ENCODE measurements at regions of chr9 and their contacts with region 1.

Region 1: GRCh38 chr9:114906908-114907571 is 23.4 kb downstream of the TNFSF8 start:
- DNase-seq: no peak
- H3K4me3 ChIP-seq: no peak overlapping the region
- H3K4me3 Mint-ChIP-seq: peak overlapping the region in 7 of 8 donors; percentile 26 to 85 (median 75)
- H3K27ac ChIP-seq: peak overlapping the region; percentile 44
- H3K27ac Mint-ChIP-seq: peak overlapping the region in 6 of 7 donors; percentile 88 to 96 (median 90)
- H3K4me1 ChIP-seq: peaks cover 100% of the 10 kb centered on the region
- H3K4me1 Mint-ChIP-seq: peaks cover 59 to 83% (median 69%) of the 10 kb centered on the region in 4 donors
- H3K27me3 ChIP-seq: no peaks in the 10 kb centered on the region
- H3K27me3 Mint-ChIP-seq: no peaks in the 10 kb centered on the region

Region 2: GRCh38 chr9:114681594-114682332 is 225.3 kb before region 1 on chr9 and contains the start of gene TEX48:
- CTCF ChIA-PET with region 1: interaction called, 111 read pairs
- POLR2A ChIA-PET with region 1: interaction called, 5 read pairs
- intact Hi-C with region 1: loop called (anchors 1 kb)
- DNase-seq: peak; percentile 79 to 84 (median 81)
- H3K4me3 ChIP-seq: peak within 1 kb of the TSS in 1 of 2 donors; percentile 11
- H3K4me3 Mint-ChIP-seq: peak within 1 kb of the TSS; percentile 1 to 80 (median 62)
- H3K27ac ChIP-seq: peak within 1 kb of the TSS; percentile 23
- H3K27ac Mint-ChIP-seq: peak within 1 kb of the TSS; percentile 75 to 96 (median 92)
- H3K4me1 ChIP-seq: peaks cover 22% of the 10 kb centered on the region
- H3K4me1 Mint-ChIP-seq: peaks cover 15 to 18% (median 17%) of the 10 kb centered on the region in 4 donors
- H3K27me3 ChIP-seq: no peaks in the 10 kb centered on the region
- H3K27me3 Mint-ChIP-seq: peaks cover 2 to 3% of the 10 kb centered on the region in 2 donors
- total RNA-seq, gene TEX48: not detected

Region 3: GRCh38 chr9:114738581-114739316 is 168.3 kb before region 1 on chr9:
- CTCF ChIA-PET with region 1: interaction called, 363 read pairs
- POLR2A ChIA-PET with region 1: interaction called, 37 read pairs
- intact Hi-C with region 1: loop called (anchors 1 kb)
- DNase-seq: peak; percentile 73 to 75 (median 74)
- H3K4me3 ChIP-seq: no peak overlapping the region
- H3K4me3 Mint-ChIP-seq: peak overlapping the region in 3 of 8 donors; percentile 16 to 64 (median 36)
- H3K27ac ChIP-seq: no peak overlapping the region
- H3K27ac Mint-ChIP-seq: peak overlapping the region; percentile 67 to 95 (median 91)
- H3K4me1 ChIP-seq: peaks cover 44% of the 10 kb centered on the region
- H3K4me1 Mint-ChIP-seq: peaks cover 34 to 54% (median 43%) of the 10 kb centered on the region in 4 donors
- H3K27me3 ChIP-seq: no peaks in the 10 kb centered on the region
- H3K27me3 Mint-ChIP-seq: no peaks in the 10 kb centered on the region

Region 4: DNA sequence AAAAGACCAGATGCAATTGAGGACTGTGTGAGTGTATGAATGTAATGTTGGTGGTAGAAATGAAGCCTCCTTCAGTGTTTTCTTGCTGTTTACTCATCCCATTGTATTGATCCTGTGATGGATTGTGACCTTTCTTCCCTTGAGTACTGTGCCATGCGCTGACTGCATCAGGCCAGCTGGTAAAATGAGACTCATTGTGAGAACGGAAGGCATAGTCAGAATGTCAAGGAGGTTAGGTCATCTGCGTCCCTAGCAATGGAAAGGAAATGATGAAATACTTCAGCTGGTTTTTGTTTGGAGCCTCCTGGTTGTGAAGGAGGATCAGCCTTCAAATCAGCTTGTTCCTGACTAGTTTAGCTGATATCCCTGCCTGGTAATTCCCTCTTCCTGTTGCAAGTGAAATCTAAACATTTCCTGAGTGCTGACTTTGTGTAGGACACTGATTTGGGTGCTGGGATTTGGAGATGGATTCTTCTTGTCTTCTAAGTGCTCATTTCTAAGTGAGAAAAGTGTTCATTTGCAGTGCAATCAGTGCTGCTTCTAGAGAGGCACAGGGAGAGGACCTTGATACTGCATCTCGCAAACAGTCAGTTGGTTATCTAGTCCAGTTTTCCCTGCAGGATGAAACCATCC is 12.1 kb before region 1 on chr9:
- CTCF ChIA-PET with region 1: interaction called, 37 read pairs
- POLR2A ChIA-PET with region 1: interaction called, 41 read pairs
- intact Hi-C with region 1: no loop called
- DNase-seq: no peak
- H3K4me3 ChIP-seq: no peak overlapping the region
- H3K4me3 Mint-ChIP-seq: peak overlapping the region in 6 of 8 donors; percentile 15 to 81 (median 67)
- H3K27ac ChIP-seq: no peak overlapping the region
- H3K27ac Mint-ChIP-seq: peak overlapping the region in 6 of 7 donors; percentile 43 to 92 (median 81)
- H3K4me1 ChIP-seq: peaks cover 79% of the 10 kb centered on the region
- H3K4me1 Mint-ChIP-seq: peaks cover 17 to 54% (median 42%) of the 10 kb centered on the region in 4 donors
- H3K27me3 ChIP-seq: no peaks in the 10 kb centered on the region
- H3K27me3 Mint-ChIP-seq: no peaks in the 10 kb centered on the region

Region 5: DNA sequence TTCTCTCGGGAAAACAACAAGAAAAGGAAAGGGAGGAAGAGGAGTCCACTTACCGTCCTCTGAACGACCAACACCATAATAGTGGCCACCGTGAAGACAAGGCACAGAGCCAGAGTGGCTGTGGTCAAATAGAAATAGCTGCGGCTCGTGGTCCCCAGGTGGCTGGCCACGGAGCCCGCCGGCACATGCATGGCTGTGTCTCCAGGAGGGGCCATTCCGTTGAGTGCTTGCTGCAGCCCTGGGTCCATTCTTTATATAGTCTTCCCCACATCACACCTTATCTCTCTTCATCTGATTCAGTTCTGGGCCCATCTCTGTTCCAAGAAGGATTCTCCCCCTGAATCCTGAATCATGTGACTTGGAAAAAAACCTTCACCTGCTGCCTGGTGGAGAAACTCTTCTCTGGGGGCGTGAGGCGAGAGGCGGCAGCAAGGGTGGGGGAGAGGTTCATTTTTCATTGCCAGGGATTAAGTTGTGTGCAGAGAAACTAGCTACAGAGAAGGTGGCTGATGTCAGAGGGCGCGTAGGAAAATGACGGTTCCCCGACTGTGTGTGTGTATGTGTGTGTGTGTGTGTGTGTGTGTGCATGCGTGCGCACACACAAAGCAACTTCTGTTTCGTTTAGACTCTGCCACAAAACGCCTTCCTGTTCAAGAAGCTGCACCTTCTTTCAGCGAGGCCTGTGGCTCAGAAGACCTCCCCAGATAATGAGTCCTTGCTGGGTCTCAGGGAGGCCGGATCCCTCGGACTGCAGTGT is 23.2 kb after region 1 on chr9 and contains the start of gene TNFSF8:
- CTCF ChIA-PET with region 1: interaction called, 90 read pairs
- POLR2A ChIA-PET with region 1: interaction called, 122 read pairs
- intact Hi-C with region 1: no loop called
- DNase-seq: peak; percentile 76 to 90 (median 80)
- H3K4me3 ChIP-seq: peak within 1 kb of the TSS; percentile 67 to 97
- H3K4me3 Mint-ChIP-seq: peak within 1 kb of the TSS; percentile 95 to 100 (median 98)
- H3K27ac ChIP-seq: peak within 1 kb of the TSS; percentile 75
- H3K27ac Mint-ChIP-seq: peak within 1 kb of the TSS; percentile 95 to 99 (median 98)
- H3K4me1 ChIP-seq: peaks cover 38% of the 10 kb centered on the region
- H3K4me1 Mint-ChIP-seq: peaks cover 31 to 66% (median 44%) of the 10 kb centered on the region in 4 donors
- H3K27me3 ChIP-seq: no peaks in the 10 kb centered on the region
- H3K27me3 Mint-ChIP-seq: no peaks in the 10 kb centered on the region
- total RNA-seq, gene TNFSF8: 43.2 to 44.2 TPM

Measured in CD4-positive, alpha-beta memory T cell (primary cell).